ENCODE measurements at regions of chr7 and their contacts with region 1.

Region 1: GRCh38 chr7:139645572-139646523 is 122.4 kb downstream of the CLEC2L start:
- DNase-seq: peak; percentile 75 to 79 (median 76)
- H3K4me3 ChIP-seq: no peak overlapping the region
- H3K4me3 Mint-ChIP-seq: peak overlapping the region in 3 of 8 donors; percentile 2 to 68 (median 8)
- H3K27ac ChIP-seq: no peak overlapping the region
- H3K27ac Mint-ChIP-seq: peak overlapping the region in 6 of 7 donors; percentile 7 to 90 (median 82)
- H3K4me1 ChIP-seq: peaks cover 49% of the 10 kb centered on the region
- H3K4me1 Mint-ChIP-seq: peaks cover 35 to 72% (median 53%) of the 10 kb centered on the region in 4 donors
- H3K27me3 ChIP-seq: no peaks in the 10 kb centered on the region
- H3K27me3 Mint-ChIP-seq: no peaks in the 10 kb centered on the region

Region 2: GRCh38 chr7:138785587-138786437 is 860.0 kb before region 1 on chr7:
- CTCF ChIA-PET with region 1: no interaction called
- POLR2A ChIA-PET with region 1: no interaction called
- intact Hi-C with region 1: no loop called
- DNase-seq: no peak
- H3K4me3 ChIP-seq: no peak overlapping the region
- H3K4me3 Mint-ChIP-seq: no peak overlapping the region
- H3K27ac ChIP-seq: no peak overlapping the region
- H3K27ac Mint-ChIP-seq: peak overlapping the region in 2 of 7 donors; percentile 33 to 37
- H3K4me1 ChIP-seq: no peaks in the 10 kb centered on the region
- H3K4me1 Mint-ChIP-seq: peaks cover 0 to 3% (median 0%) of the 10 kb centered on the region in 4 donors
- H3K27me3 ChIP-seq: no peaks in the 10 kb centered on the region
- H3K27me3 Mint-ChIP-seq: peaks cover 8 to 10% of the 10 kb centered on the region in 2 donors

Region 3: GRCh38 chr7:139355320-139355719 is 290.5 kb before region 1 on chr7:
- CTCF ChIA-PET with region 1: no interaction called
- POLR2A ChIA-PET with region 1: no interaction called
- intact Hi-C with region 1: no loop called
- DNase-seq: no peak
- H3K4me3 ChIP-seq: no peak overlapping the region
- H3K4me3 Mint-ChIP-seq: no peak overlapping the region
- H3K27ac ChIP-seq: no peak overlapping the region
- H3K27ac Mint-ChIP-seq: peak overlapping the region in 3 of 7 donors; percentile 2 to 30 (median 9)
- H3K4me1 ChIP-seq: peaks cover 9% of the 10 kb centered on the region
- H3K4me1 Mint-ChIP-seq: peaks cover 12 to 35% (median 16%) of the 10 kb centered on the region in 4 donors
- H3K27me3 ChIP-seq: no peaks in the 10 kb centered on the region
- H3K27me3 Mint-ChIP-seq: no peaks in the 10 kb centered on the region

Region 4: GRCh38 chr7:139589474-139589873 is 56.4 kb before region 1 on chr7:
- CTCF ChIA-PET with region 1: interaction called, 11 read pairs
- POLR2A ChIA-PET with region 1: no interaction called
- intact Hi-C with region 1: no loop called
- DNase-seq: no peak
- H3K4me3 ChIP-seq: no peak overlapping the region
- H3K4me3 Mint-ChIP-seq: no peak overlapping the region
- H3K27ac ChIP-seq: no peak overlapping the region
- H3K27ac Mint-ChIP-seq: peak overlapping the region in 2 of 7 donors; percentile 22 to 35
- H3K4me1 ChIP-seq: no peaks in the 10 kb centered on the region
- H3K4me1 Mint-ChIP-seq: no peaks in the 10 kb centered on the region
- H3K27me3 ChIP-seq: no peaks in the 10 kb centered on the region
- H3K27me3 Mint-ChIP-seq: no peaks in the 10 kb centered on the region

Region 5: GRCh38 chr7:139626817-139627216 is 19.0 kb before region 1 on chr7:
- CTCF ChIA-PET with region 1: interaction called, 32 read pairs
- POLR2A ChIA-PET with region 1: interaction called, 12 read pairs
- intact Hi-C with region 1: no loop called
- DNase-seq: peak in 4 of 5 donors; percentile 17 to 46 (median 41)
- H3K4me3 ChIP-seq: no peak overlapping the region
- H3K4me3 Mint-ChIP-seq: peak overlapping the region in 7 of 8 donors; percentile 44 to 82 (median 63)
- H3K27ac ChIP-seq: peak overlapping the region; percentile 38
- H3K27ac Mint-ChIP-seq: peak overlapping the region; percentile 82 to 97 (median 94)
- H3K4me1 ChIP-seq: peaks cover 53% of the 10 kb centered on the region
- H3K4me1 Mint-ChIP-seq: peaks cover 50 to 81% (median 64%) of the 10 kb centered on the region in 4 donors
- H3K27me3 ChIP-seq: no peaks in the 10 kb centered on the region
- H3K27me3 Mint-ChIP-seq: no peaks in the 10 kb centered on the region

Region 6: GRCh38 chr7:139753081-139753692 is 107.3 kb after region 1 on chr7:
- CTCF ChIA-PET with region 1: interaction called, 10 read pairs
- POLR2A ChIA-PET with region 1: no interaction called
- intact Hi-C with region 1: no loop called
- DNase-seq: no peak
- H3K4me3 ChIP-seq: no peak overlapping the region
- H3K4me3 Mint-ChIP-seq: no peak overlapping the region
- H3K27ac ChIP-seq: no peak overlapping the region
- H3K27ac Mint-ChIP-seq: no peak overlapping the region
- H3K4me1 ChIP-seq: peaks cover 3% of the 10 kb centered on the region
- H3K4me1 Mint-ChIP-seq: peaks cover 36 to 70% (median 56%) of the 10 kb centered on the region in 4 donors
- H3K27me3 ChIP-seq: no peaks in the 10 kb centered on the region
- H3K27me3 Mint-ChIP-seq: no peaks in the 10 kb centered on the region

Region 7: GRCh38 chr7:139829025-139829774 is 183.4 kb after region 1 on chr7 and contains the start of gene TBXAS1:
- CTCF ChIA-PET with region 1: interaction called, 22 read pairs
- POLR2A ChIA-PET with region 1: no interaction called
- intact Hi-C with region 1: loop called (anchors 1 kb)
- DNase-seq: peak in 4 of 5 donors; percentile 18 to 35 (median 28)
- H3K4me3 ChIP-seq: peak within 1 kb of the TSS; percentile 7 to 18
- H3K4me3 Mint-ChIP-seq: peak within 1 kb of the TSS; percentile 83 to 90 (median 87)
- H3K27ac ChIP-seq: peak within 1 kb of the TSS; percentile 36
- H3K27ac Mint-ChIP-seq: peak within 1 kb of the TSS; percentile 84 to 97 (median 93)
- H3K4me1 ChIP-seq: peaks cover 28% of the 10 kb centered on the region
- H3K4me1 Mint-ChIP-seq: peaks cover 24 to 42% (median 31%) of the 10 kb centered on the region in 4 donors
- H3K27me3 ChIP-seq: no peaks in the 10 kb centered on the region
- H3K27me3 Mint-ChIP-seq: peaks cover 2 to 3% of the 10 kb centered on the region in 2 donors
- total RNA-seq, gene TBXAS1: 16.6 to 18.0 TPM

Region 8: DNA sequence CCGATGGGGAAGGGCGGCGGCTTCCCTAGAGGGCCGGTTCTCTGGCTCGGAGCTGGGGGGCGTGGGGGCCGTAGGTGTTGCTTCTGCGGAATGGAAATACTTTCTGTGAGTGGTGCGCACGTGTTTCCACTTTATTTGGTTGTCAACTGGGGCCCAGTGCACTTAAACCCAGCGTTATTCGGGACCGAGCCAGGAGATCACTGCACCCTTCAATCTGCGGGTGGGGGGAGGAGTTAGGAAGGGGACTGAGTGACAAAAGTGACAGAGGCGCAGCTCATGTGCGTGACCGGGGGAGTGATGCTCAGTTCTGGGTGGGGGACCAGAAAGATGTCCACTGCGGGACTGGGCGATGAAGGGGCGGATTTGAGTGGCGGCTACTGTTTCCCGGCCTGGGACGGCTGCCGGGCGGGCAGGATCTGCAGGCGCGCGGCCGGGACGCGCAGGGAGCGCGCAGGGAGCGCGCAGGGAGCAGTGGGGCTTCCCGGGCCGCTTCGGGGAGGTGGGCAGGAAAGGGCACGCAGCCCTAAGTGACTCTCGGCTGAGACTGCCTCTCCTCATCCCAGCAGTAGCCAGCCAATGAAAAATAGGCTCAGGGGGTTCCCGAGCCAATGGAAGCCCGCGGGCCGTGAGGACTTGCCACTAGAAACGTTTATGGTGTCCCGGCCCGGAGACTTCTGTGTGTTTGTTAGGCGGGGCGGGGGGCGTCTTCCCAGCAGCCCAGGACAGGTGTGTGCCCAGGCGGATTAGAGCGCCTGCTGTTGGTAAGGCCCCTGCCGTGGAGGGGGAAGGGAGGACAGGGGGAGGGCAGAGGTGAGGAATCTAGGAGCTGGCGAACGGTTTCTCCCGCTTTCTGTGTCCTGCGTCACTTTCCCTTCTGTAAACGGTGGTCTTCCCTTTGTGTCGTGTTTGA is 585.3 kb after region 1 on chr7:
- CTCF ChIA-PET with region 1: no interaction called
- POLR2A ChIA-PET with region 1: no interaction called
- intact Hi-C with region 1: loop called (anchors 2 kb)
- DNase-seq: peak; percentile 25 to 76 (median 46)
- H3K4me3 ChIP-seq: peak overlapping the region; percentile 50 to 83
- H3K4me3 Mint-ChIP-seq: peak overlapping the region; percentile 92 to 97 (median 94)
- H3K27ac ChIP-seq: peak overlapping the region; percentile 84
- H3K27ac Mint-ChIP-seq: peak overlapping the region; percentile 95 to 100 (median 98)
- H3K4me1 ChIP-seq: peaks cover 24% of the 10 kb centered on the region
- H3K4me1 Mint-ChIP-seq: peaks cover 25 to 51% (median 30%) of the 10 kb centered on the region in 4 donors
- H3K27me3 ChIP-seq: no peaks in the 10 kb centered on the region
- H3K27me3 Mint-ChIP-seq: no peaks in the 10 kb centered on the region

Measured in CD4-positive, alpha-beta memory T cell (primary cell).